ENCODE measurements at regions of chr17 and their contacts with region 1.

Region 1: DNA sequence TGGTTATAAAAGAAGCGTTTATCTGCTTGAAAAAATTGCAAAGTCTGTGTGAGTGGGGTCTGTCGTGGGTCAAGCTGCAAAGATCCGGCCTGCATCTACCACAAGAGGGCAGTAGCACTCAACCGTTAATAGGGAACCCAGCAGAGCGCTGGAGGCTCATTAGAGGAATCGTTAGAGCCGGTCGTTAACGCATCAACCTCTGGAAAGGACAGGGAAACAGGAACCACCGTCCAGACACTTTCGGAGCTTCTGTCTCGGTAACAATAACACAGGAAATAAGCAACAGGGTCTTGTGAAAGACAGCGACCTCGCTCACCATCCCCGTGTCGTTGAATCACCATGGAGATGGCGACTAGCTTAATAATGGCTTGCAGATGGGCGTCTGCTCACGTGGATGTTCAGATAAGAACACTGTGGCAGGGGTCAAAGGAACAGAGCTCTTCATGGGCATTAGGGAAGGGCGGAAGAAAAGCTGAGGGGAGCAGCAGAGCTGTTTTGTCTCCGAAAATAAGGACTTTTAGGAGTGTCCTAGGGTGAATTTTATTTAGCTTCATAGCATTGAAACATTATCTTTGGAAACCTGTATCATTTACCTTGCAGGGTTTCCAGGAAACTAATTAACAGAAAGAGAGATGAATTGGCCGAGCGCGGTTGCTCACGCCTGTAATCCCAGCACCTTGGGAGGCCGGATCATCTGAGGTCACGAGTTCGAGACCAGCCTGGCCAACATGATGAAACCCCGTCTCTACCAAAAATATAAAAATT is 11.9 kb upstream of the NSRP1 start:
- DNase-seq: peak; percentile 71
- CTCF ChIP-seq: peak; percentile 80

Region 2: DNA sequence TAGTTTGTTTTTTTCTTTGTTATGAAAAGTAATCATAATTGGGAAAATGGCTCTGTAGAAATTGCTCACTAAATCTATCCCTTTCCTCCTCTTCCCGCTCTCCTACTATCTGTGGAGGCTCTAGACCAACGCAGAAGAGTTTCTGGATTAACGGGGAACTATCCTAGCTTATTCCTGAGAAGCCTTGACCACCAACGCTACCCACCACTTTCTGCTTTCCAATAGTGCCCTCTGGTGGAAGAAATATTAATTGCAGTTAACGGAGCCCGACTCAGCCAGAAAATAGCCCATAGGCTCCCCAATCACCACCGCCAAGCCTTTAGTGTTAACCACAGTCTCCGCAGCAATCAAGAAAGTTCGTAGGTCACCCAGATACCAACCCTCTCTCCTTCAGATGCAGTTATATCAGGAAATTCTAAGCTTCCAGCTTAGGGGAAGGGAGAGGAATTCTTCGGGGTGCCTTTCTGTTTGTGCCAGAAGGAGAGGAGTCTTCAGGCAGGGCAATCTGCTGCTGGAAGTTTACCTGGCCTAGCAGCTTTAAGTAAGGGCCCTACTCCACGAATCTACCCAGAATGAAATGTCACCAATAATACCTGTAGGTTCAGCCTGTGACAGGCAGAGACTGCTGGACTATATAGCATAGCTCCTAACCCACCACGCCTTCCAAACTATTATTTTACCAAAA is 11.2 kb before region 1 on chr17:
- CTCF ChIA-PET with region 1: interaction called, 99 read pairs
- POLR2A ChIA-PET with region 1: no interaction called
- DNase-seq: peak; percentile 72
- CTCF ChIP-seq: peak; percentile 79

Region 3: DNA sequence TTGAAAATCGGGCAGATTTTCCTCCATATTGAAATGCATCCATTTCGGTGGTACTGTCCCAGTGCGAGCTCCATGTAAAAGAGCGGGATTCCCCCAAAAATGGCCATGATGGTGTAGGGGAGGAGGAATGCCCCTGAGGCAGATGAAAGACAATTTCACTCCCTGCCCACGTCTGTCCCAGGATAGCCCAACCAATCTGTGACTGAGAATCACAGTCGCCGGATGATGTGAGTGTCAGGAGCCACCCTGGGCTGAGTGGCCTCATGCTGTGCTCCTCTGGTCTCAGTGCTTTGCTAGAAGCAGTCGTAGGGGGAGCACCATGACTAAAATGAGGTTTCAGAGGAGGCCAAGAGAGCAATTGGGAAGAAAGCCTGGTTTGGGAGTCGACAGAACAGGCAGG is 114.0 kb after region 1 on chr17:
- CTCF ChIA-PET with region 1: interaction called, 15 read pairs
- POLR2A ChIA-PET with region 1: no interaction called
- DNase-seq: peak; percentile 58
- CTCF ChIP-seq: peak; percentile 4

Region 4: DNA sequence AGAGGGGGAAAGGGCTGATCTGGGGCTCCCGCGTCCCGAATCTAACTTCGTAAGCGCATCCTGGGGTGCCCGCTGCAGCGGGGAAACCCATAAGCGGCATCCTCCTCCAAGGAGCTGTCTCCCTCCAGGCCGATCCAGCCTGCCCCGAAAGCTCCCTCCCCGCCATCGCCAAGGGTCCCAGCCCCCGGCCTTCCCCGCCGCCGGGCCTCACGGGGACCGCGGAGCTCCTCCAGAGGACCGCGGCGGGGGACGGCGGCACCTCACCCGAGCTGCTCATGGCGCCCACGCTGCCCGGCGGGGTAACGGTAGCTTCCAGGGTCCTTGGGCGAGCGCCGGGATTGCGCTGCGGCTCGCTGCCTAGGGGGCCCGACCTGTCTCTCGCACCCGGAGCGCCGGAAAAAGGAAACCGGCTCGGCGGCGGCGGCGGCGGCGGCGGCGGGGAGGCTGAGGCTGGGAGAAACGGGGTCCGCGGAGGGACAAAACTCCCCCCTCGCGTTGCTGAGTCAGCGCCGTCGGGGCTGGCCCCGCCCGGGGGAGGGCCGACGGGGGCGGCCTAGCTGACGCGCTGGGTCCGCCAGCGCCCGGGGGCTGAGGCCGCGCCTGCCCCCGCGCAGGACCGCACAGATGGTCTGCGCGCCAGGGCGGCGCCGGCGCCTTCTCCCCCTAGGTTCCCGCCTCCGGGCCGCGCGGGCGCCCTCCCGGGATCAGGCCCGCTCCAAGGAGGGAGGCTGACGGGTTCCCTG is 187.0 kb after region 1 on chr17 and contains the start of gene BLMH:
- CTCF ChIA-PET with region 1: interaction called, 10 read pairs
- POLR2A ChIA-PET with region 1: no interaction called
- DNase-seq: peak; percentile 95
- CTCF ChIP-seq: no peak

Region 5: DNA sequence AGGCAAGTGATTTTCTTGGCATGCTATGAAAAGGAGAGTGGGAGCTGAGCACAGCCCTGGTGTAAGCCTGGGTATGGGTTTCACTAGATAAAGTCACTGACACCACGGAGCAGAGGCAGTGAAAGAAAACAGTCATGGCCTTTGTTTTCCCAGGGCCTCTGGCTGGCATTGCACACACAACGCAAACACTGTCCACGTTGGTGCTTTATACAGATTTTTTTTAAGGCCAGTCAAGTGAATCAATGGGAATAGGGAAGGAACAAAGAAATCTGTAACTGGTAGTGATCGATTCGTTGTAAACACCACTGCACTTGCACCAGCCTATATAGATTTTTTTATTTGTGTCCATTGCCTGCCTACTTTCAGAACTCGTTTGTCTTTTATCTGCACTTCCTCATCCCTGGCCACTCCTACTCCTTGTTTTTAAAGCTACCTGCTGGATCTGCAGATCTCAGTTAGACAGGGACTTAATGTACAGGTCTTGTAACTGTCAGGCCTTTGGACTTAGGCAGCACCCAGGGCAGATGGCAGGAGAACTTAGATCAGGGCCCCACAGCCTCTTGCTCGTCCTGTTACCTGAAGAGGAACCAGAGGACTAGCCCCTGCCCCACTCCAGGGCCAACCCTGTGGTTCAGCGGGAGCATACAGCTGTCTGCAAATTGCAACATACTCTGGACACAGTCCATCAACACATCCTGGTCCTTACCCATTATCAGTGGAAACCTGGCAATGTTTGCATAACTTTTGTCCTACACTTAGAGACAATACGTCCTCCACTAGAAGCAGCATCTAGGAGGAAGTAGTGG is 239.7 kb after region 1 on chr17:
- CTCF ChIA-PET with region 1: interaction called, 158 read pairs
- POLR2A ChIA-PET with region 1: no interaction called
- DNase-seq: no peak
- CTCF ChIP-seq: no peak